ENCODE measurements at regions of chr22 and their contacts with region 1.

Region 1: GRCh38 chr22:23281406-23282088 is 101.2 kb downstream of the BCR start:
- DNase-seq: peak; percentile 81 to 86
- H3K4me3 ChIP-seq: no peak overlapping the region
- H3K4me3 Mint-ChIP-seq: no peak overlapping the region
- H3K27ac Mint-ChIP-seq: no peak overlapping the region
- H3K4me1 ChIP-seq: no peaks in the 10 kb centered on the region
- H3K4me1 Mint-ChIP-seq: no peaks in the 10 kb centered on the region
- H3K27me3 ChIP-seq: no peaks in the 10 kb centered on the region
- H3K27me3 Mint-ChIP-seq: no peaks in the 10 kb centered on the region
- CTCF ChIP-seq: peak; percentile 92

Region 2: GRCh38 chr22:23204541-23205157 is 76.9 kb before region 1 on chr22:
- CTCF ChIA-PET with region 1: no interaction called
- POLR2A ChIA-PET with region 1: no interaction called
- intact Hi-C with region 1: no loop called
- DNase-seq: no peak
- H3K4me3 ChIP-seq: no peak overlapping the region
- H3K4me3 Mint-ChIP-seq: no peak overlapping the region
- H3K27ac Mint-ChIP-seq: no peak overlapping the region
- H3K4me1 ChIP-seq: no peaks in the 10 kb centered on the region
- H3K4me1 Mint-ChIP-seq: no peaks in the 10 kb centered on the region
- H3K27me3 ChIP-seq: no peaks in the 10 kb centered on the region
- H3K27me3 Mint-ChIP-seq: no peaks in the 10 kb centered on the region
- CTCF ChIP-seq: no peak

Region 3: DNA sequence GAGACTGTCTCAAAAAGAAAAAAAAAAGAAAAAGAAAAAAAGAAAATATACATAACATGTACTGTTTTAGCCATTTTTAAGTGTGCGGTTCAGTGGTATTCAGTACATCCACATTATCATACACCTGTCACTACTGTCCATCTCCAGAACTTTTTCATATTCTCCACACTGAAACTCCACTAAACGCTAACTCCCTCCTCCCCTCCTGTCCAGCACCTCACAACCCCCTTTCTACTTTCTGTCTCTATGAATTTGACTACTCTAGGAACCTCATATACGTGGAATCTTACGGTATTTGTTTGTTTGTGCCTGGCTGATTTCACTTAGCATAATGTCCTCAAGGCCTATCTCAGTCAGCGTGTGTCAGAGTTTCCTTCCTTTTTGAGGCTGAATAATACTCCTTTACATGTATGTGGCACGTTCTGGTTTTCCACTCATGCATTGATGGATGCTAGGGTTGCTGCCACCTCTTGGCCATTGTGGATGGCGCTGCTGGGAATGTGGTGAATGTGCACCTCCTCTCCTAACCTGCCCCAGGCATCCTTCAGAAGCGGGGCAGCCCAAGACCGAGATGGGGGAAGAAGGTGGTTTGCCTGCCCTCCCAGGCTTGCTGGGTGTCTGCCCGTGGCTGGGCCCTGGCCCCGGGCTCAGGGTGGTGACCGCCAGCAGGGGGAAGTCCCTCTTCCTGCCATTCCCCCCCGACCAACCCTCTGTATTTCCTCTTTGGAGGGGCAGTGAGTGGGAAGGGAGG is 40.7 kb before region 1 on chr22:
- CTCF ChIA-PET with region 1: interaction called, 12 read pairs
- POLR2A ChIA-PET with region 1: no interaction called
- intact Hi-C with region 1: no loop called
- DNase-seq: peak; percentile 49 to 50
- H3K4me3 ChIP-seq: no peak overlapping the region
- H3K4me3 Mint-ChIP-seq: peak overlapping the region; percentile 69
- H3K27ac Mint-ChIP-seq: peak overlapping the region; percentile 94
- H3K4me1 ChIP-seq: peaks cover 54% of the 10 kb centered on the region
- H3K4me1 Mint-ChIP-seq: peaks cover 48% of the 10 kb centered on the region
- H3K27me3 ChIP-seq: no peaks in the 10 kb centered on the region
- H3K27me3 Mint-ChIP-seq: no peaks in the 10 kb centered on the region
- CTCF ChIP-seq: peak in 1 of 2 experiments; percentile 31

Region 4: DNA sequence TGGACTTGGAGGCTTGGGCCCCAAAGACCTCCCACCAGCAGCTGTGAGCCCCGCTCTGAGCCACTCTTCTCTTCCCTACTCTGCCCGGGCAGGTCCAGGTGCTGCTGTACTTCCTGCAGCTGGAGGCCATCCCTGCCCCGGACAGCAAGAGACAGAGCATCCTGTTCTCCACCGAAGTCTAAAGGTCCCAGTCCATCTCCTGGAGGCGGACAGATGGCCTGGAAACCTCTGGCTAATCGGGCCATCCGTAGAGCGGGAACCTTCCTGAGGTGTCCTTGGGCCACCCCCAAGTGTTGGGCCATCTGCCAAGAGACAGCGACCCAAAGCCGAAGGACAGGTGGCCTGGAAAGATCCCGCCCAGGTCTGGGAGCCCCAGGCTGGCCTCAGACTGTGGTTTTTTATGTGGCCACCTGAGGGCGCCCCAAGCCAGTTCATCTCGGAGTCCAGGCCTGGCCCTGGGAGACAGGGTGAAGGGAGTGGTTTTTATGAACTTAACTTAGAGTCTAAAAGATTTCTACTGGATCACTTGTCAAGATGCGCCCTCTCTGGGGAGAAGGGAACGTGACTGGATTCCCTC is 33.9 kb after region 1 on chr22:
- CTCF ChIA-PET with region 1: no interaction called
- POLR2A ChIA-PET with region 1: no interaction called
- intact Hi-C with region 1: no loop called
- DNase-seq: peak; percentile 55 to 77
- H3K4me3 ChIP-seq: no peak overlapping the region
- H3K4me3 Mint-ChIP-seq: no peak overlapping the region
- H3K27ac Mint-ChIP-seq: no peak overlapping the region
- H3K4me1 ChIP-seq: no peaks in the 10 kb centered on the region
- H3K4me1 Mint-ChIP-seq: no peaks in the 10 kb centered on the region
- H3K27me3 ChIP-seq: no peaks in the 10 kb centered on the region
- H3K27me3 Mint-ChIP-seq: no peaks in the 10 kb centered on the region
- CTCF ChIP-seq: peak; percentile 17 to 56